GM18951 (cell line): ENCODE measurements at regions of chr2 and their contacts with region 1.

Region 1: DNA sequence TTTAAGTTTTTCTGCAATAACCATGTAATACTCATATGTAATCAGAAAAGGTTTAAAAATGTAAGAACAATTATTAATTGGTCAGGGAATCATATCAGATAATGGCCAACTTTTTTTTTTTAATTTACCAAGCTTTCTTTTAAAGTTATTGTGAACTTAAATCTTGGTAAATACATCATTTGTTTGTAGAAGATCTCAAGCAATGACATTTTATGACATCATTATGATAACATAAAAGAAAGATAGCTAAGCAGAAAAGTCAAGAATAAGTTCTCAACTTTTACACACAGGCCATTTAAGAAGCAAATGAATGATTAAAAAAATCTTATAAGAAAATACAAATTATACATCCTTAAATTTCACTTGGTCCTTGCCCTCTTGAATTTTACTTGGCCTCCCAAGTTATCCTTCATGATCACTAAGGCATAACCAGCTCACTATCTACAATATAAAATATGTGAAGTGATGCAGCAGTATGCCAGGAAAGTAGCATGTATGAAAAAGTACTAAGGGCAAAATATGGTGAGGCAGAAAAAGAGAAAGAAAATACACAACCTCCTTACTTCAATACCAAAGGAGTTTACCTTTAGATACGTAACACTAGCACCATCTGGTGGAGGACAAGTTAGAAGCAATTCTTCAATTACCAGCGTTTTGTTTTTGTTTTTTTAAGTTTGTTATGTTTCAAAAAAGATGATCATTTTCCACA is 116.6 kb downstream of the SRBD1 start:
- POLR2A ChIP-seq: no peak

Region 2: DNA sequence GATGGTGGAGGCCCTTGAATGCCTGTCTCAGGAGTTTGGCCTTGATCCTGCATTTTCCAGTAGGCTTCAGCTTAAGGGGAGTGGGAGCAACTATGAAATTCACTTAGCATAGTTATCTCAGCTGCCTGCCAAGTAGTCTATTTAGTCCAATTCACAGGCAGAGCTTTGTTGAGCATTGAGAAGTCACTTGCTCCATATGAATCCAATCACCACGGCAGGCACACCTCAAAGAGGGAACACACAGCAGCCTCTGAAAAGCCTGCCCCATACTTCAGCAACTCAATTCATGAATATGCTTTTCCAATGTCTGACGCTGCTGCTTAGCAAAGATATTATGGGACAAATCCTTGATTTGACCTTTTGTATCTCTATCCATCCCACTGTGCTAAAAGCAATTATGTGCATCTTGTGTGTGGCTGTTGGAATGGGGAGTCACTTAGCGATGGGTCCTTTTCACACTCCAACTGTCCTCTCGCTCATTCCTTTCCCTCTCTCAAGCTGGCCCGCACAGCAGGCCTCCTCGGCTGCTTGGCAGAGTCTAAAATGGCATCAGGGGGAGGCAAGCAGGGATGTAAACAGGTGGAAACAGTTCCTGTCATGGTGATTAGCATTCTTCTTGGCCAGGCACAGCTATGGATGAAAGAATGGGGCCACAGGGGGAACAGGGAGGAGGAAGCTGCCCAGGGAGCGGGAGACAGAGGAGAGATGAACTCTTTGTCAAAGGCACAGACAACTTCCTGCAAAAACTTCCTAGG is 1442.7 kb before region 1 on chr2:
- in situ Hi-C with region 1: loop called (anchors 25 kb)
- POLR2A ChIP-seq: no peak